Right cardiac atrium (tissue), 5 donors: ENCODE measurements at regions of chr3 and their contacts with region 1.

Region 1: GRCh38 chr3:14791343-14791945 is 27.3 kb upstream of the FGD5 start:
- DNase-seq: peak; percentile 63 to 85 (median 84)
- ATAC-seq: peak in 1 of 2 donors; percentile 55
- H3K4me3 ChIP-seq: no peak overlapping the region
- H3K27ac ChIP-seq: no peak overlapping the region
- H3K4me1 ChIP-seq: peaks cover 8% of the 10 kb centered on the region
- H3K27me3 ChIP-seq: no peaks in the 10 kb centered on the region

Region 2: DNA sequence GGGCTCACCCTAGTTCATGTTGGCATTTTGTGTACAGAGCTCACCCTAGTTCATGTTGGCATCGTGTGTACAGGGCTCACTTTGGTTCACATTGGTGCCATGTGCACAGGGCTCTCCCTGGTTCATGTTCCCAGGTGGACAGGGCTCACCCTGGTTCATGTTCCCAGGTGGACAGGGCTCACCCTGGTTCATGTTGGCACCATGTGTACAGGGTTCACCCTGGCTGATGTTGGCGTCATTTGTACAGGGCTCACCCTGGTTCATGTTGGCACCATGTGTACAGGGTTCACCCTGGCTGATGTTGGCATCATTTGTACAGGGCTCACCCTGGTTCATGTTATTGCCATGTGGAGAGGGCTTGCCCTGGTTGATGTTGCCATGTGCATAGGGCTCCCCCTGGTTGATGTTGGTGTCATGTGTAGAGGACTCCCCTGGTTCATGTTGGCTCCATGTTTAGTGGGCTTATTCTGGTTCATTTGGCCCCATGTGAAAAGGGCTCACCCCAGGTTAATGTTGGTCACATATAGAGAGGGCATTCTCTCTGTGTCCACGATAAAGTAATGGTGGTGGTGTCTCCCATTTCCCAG is 124.3 kb after region 1 on chr3:
- intact Hi-C with region 1: loop called (anchors 2 to 5 kb)
- DNase-seq: no peak
- ATAC-seq: peak; percentile 19 to 22
- H3K4me3 ChIP-seq: no peak overlapping the region
- H3K27ac ChIP-seq: no peak overlapping the region
- H3K4me1 ChIP-seq: peaks cover 3% of the 10 kb centered on the region
- H3K27me3 ChIP-seq: no peaks in the 10 kb centered on the region

Region 3: DNA sequence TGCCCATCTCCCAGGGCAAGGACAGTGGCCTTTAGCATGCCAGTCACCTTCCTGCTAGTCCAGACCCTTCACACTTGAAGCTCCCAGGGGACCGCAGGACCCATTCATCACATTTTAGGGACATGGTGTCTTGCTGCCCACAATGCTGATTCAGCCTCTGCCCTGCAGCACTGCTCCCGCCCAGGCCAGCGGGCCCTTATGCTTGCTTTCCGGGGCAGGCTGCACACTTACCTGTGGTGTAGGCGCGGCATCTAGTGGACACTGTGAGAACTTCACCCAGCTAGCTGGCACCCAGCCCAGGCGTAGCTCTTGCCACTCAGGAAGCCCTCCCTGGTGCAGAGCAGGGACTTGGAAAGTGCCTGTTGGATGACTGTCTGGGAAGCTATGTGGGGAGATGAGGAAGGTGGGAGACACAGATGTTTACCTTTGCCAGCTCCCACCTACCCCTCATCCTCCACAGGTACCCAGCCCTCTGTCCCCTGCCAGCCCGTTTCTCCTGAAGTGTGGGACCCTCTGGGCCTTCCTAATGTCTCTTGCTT is 129.7 kb after region 1 on chr3:
- intact Hi-C with region 1: loop called (anchors 2 to 5 kb)
- DNase-seq: peak; percentile 87 to 96 (median 95)
- ATAC-seq: peak; percentile 91 to 93
- H3K4me3 ChIP-seq: no peak overlapping the region
- H3K27ac ChIP-seq: no peak overlapping the region
- H3K4me1 ChIP-seq: no peaks in the 10 kb centered on the region
- H3K27me3 ChIP-seq: no peaks in the 10 kb centered on the region